ENCODE measurements at regions of chr7 and their contacts with region 1.

Region 1: DNA sequence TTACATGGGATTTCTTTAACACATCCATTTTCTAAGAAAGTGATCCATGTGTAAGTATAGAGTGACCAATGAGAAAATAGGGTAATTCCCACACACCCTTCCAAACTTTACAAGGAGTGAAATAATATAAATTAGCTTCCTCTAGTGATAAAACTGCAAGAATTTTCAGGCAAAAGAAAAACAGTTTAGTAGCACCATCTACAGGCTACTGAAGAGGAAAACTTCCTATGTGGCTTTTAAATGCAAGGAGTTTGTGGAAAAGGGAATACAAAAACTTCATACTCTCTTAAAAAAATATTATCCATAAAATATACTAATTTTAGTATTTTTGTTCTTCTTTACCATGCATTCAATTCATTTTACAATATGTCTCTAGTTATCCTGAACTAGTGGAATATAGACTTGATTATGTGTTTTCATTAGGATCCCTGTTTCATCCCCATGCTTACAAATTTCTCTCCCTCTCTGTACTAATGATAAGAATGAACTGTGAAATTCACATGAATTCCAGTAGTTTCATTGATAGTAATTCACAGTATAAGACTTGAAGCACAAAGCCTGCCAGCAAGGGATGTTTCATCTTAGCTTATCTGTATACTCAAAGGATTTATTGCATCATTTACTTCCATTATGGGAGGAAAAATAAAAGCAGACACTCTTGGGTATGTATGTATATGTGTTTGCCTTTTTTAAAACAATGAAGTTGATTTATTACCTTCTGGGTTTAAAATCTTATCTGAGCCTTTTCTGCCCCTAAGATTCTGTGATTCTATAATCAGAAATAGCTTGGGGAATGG is 442.9 kb downstream of the AUTS2 start:
- DNase-seq: no peak
- CTCF ChIP-seq: peak; percentile 41

Region 2: DNA sequence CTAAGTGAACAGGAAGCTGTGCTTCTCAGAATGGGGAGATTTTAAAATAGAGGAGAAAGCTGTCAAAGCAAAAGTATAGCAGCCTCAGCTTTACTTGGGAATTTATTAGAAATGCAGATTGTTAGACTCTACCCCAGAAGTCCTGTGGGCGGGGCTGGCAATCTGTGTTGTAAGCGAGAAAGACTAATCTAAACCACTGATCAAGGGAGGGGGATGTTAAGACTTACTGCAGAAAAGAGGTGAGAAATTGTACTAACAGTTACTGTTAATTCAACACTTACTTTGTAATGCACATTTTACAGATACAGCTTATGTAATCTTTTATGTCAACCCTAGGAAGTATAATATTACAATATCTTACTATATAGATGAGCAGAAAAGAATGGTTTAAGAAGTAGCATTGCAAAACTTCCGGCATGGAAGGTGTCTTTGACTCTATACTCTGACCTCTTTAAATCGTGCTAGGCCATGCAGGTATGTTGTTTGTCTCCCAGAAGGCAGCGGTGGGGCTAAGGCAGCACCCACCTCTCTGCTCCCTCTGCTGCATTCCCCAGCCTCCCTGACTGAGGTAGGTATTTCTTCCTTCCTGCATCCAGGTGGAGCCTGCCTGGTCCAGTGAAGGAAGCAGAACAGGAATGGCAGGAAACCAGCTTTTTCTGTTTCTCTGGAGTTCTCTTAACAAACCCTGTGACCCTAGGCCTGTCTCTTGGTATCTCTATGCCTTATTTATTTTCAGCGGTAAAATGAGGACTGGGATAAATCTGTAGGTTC is 19.3 kb after region 1 on chr7:
- CTCF ChIA-PET with region 1: interaction called, 11 read pairs
- POLR2A ChIA-PET with region 1: no interaction called
- DNase-seq: no peak
- CTCF ChIP-seq: no peak

Region 3: GRCh38 chr7:70215491-70215890 is 174.3 kb after region 1 on chr7:
- CTCF ChIA-PET with region 1: no interaction called
- POLR2A ChIA-PET with region 1: no interaction called
- DNase-seq: peak; percentile 14
- CTCF ChIP-seq: no peak

Region 4: GRCh38 chr7:70698219-70698832 is 657.2 kb after region 1 on chr7:
- CTCF ChIA-PET with region 1: interaction called, 19 read pairs
- POLR2A ChIA-PET with region 1: no interaction called
- DNase-seq: peak; percentile 45
- CTCF ChIP-seq: peak; percentile 84